B cell (primary cell): ENCODE measurements at regions of chr18 and their contacts with region 1.

Region 1: GRCh38 chr18:24964216-24964615 is 387.8 kb downstream of the ZNF521 start:
- DNase-seq: peak; percentile 76
- ATAC-seq: peak; percentile 100
- H3K4me3 ChIP-seq: no peak overlapping the region
- H3K4me3 Mint-ChIP-seq: no peak overlapping the region
- H3K27ac ChIP-seq: peak overlapping the region; percentile 52 to 85
- H3K27ac Mint-ChIP-seq: peak overlapping the region; percentile 87
- H3K4me1 ChIP-seq: peaks cover 14 to 15% of the 10 kb centered on the region in 2 donors
- H3K4me1 Mint-ChIP-seq: peaks cover 14% of the 10 kb centered on the region
- H3K27me3 ChIP-seq: no peaks in the 10 kb centered on the region
- H3K27me3 Mint-ChIP-seq: no peaks in the 10 kb centered on the region
- CTCF ChIP-seq: no peak

Region 2: GRCh38 chr18:24923138-24923537 is 41.1 kb before region 1 on chr18:
- CTCF ChIA-PET with region 1: interaction called, 4 read pairs
- POLR2A ChIA-PET with region 1: no interaction called
- intact Hi-C with region 1: loop called (anchors 1 kb)
- DNase-seq: peak; percentile 33
- ATAC-seq: peak; percentile 79
- H3K4me3 ChIP-seq: peak overlapping the region in 1 of 5 experiments; percentile 12
- H3K4me3 Mint-ChIP-seq: peak overlapping the region; percentile 75
- H3K27ac ChIP-seq: peak overlapping the region; percentile 4 to 62
- H3K27ac Mint-ChIP-seq: peak overlapping the region; percentile 74
- H3K4me1 ChIP-seq: peaks cover 62 to 68% of the 10 kb centered on the region in 2 donors
- H3K4me1 Mint-ChIP-seq: peaks cover 71% of the 10 kb centered on the region
- H3K27me3 ChIP-seq: no peaks in the 10 kb centered on the region
- H3K27me3 Mint-ChIP-seq: no peaks in the 10 kb centered on the region
- CTCF ChIP-seq: no peak

Region 3: DNA sequence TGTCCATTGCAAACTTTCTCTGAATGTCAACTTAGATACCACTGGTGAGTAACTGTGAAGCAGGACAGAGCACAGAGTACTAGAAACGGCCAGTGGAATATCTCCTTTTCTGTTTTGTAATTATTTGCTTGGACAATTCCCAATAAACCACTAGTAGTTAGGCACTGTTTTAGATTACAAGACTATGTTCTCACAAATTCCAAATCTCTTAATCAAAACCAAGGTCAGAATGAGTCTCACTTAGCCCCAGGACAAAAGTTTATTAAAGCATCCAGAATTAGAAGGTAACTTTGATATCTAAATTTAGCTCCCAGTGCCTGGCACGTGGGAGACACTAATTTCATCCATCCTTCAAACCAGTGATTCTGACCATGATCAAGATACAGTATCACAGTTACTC is 298.7 kb after region 1 on chr18:
- CTCF ChIA-PET with region 1: no interaction called
- POLR2A ChIA-PET with region 1: no interaction called
- intact Hi-C with region 1: no loop called
- DNase-seq: no peak
- ATAC-seq: no peak
- H3K4me3 ChIP-seq: no peak overlapping the region
- H3K4me3 Mint-ChIP-seq: no peak overlapping the region
- H3K27ac ChIP-seq: no peak overlapping the region
- H3K27ac Mint-ChIP-seq: no peak overlapping the region
- H3K4me1 ChIP-seq: no peaks in the 10 kb centered on the region
- H3K4me1 Mint-ChIP-seq: no peaks in the 10 kb centered on the region
- H3K27me3 ChIP-seq: no peaks in the 10 kb centered on the region
- H3K27me3 Mint-ChIP-seq: peaks cover 19% of the 10 kb centered on the region
- CTCF ChIP-seq: no peak